ENCODE measurements at regions of chr5 and their contacts with region 1.

Region 1: DNA sequence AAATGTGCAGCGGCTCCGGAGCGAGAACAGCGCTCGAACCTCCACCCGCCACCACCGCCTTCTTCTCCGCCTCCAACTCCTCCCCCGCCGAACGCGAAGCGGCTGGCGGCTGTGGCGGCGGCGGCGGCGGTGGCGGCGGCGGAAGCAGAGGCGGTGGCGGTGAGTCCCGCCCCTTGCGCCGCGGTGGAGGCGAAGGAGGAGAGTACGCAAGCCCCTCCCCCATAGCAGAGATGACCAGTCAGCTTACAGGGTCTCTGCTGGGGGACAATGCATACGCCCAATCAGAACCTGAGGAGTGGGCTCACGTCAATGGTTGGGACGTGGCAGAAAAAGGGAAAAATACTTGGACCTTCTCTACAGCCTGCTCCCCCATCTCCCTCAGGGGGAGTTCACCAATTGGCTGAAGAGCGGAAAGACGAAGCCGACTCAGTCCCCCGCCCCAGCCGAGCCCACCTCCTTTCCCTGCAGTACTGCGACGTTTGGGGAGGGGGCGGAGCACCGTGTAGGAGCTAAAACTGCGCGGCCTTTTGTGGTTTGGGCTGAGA is at the start of gene PJA2:
- DNase-seq: peak; percentile 99
- H3K4me3 Mint-ChIP-seq: peak within 1 kb of the TSS; percentile 97
- H3K27ac Mint-ChIP-seq: peak within 1 kb of the TSS; percentile 100
- H3K4me1 Mint-ChIP-seq: peaks cover 46% of the 10 kb centered on the region
- H3K27me3 Mint-ChIP-seq: no peaks in the 10 kb centered on the region
- total RNA-seq, gene PJA2: 53.1 to 56.9 TPM

Region 2: DNA sequence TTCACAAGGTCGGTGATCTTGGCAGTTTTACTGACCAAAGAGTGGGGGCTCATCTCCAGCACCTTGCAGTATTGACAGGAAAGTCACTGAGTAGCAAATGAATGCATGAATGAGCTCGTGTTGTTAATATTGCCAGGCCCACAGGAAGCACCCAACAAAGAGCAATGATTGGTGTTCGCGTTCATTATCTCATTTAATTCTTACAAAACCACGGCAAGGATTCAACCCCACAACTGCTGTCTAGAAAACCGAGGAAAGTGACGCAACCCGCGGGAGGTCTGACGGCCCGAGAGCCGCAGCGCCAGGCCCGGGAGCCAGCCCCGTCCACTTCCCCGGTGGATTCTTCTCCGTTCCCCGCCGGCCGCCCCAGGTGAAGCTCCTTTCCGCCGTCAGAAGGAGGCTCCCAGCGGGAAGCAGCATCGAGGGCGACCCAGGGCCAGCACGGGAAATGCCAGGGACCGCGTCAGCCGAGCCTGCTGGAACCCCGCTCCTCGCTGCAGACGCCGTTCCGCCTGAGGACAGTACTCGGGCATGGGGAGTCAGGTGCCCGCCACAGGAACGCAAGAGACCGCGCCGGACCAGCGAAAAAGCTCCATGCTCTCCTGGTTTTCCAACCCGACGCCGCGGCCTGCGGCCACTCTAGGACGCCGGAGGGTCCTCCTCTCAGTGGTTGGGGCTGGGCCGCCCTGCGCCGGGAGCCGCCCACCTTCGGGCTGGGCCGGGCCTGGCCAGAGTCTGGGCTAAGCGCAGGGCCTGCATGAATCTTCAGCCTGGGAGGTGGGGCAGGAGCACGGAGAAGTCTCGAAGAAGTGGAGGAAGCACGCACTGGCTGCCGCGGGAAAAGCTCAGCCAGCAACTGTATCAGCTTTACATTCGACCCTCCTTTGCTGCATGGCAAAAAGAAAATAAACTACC is 682.0 kb before region 1 on chr5:
- CTCF ChIA-PET with region 1: interaction called, 4 read pairs
- intact Hi-C with region 1: loop called (anchors 2 kb)
- DNase-seq: peak; percentile 53
- H3K4me3 Mint-ChIP-seq: peak overlapping the region; percentile 61
- H3K27ac Mint-ChIP-seq: peak overlapping the region; percentile 6
- H3K4me1 Mint-ChIP-seq: peaks cover 21% of the 10 kb centered on the region
- H3K27me3 Mint-ChIP-seq: peaks cover 42% of the 10 kb centered on the region

Region 3: DNA sequence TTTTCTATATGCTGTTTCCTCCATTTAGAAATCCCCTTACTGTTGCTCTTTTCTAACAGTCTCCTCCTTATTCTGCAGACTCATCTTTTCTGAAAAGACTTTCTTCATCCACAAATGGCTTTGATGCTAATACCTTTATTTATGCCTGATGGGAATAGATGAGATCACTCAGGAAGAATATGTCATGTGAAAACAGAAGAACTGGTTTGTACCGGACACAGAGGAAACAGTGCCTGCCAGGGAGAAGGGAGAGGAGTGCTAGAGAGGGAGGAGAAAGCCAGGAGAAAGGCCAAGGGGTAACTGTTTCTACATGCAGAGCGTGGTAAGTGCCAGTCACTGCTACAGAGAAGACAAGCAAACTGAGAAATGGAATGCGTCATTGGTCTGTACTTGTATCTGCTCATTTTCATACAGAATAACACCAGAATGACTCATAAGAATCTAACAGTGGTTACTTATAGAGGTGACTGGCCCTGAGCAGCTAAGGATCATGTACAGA is 45.7 kb after region 1 on chr5:
- CTCF ChIA-PET with region 1: interaction called, 3 read pairs
- intact Hi-C with region 1: loop called (anchors 1 kb)
- DNase-seq: peak; percentile 54
- H3K4me3 Mint-ChIP-seq: peak overlapping the region; percentile 23
- H3K27ac Mint-ChIP-seq: peak overlapping the region; percentile 88
- H3K4me1 Mint-ChIP-seq: peaks cover 10% of the 10 kb centered on the region
- H3K27me3 Mint-ChIP-seq: peaks cover 10% of the 10 kb centered on the region

Region 4: DNA sequence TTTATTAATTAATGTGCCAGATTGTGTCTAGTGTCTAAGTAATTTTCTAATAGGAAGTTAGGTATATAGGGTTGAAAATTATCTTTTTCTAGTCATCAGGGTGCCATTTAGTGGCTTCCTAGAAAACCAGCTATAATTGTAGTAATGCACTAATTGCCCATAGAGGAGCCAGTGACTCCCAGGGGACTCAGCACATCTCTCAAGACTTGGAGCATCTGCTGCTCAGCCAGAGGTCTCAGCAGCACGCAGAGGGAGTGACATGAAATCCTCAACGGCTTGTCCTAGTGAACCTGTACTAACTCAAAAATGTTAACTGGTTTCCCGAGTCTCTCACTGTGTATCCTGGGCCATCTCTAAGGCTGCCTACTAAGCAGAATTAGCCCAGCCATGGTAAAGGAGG is 201.6 kb after region 1 on chr5:
- CTCF ChIA-PET with region 1: no interaction called
- intact Hi-C with region 1: no loop called
- DNase-seq: no peak
- H3K4me3 Mint-ChIP-seq: no peak overlapping the region
- H3K27ac Mint-ChIP-seq: no peak overlapping the region
- H3K4me1 Mint-ChIP-seq: no peaks in the 10 kb centered on the region
- H3K27me3 Mint-ChIP-seq: no peaks in the 10 kb centered on the region

Region 5: GRCh38 chr5:109936996-109937395 is 527.1 kb after region 1 on chr5:
- CTCF ChIA-PET with region 1: no interaction called
- intact Hi-C with region 1: loop called (anchors 5 kb)
- DNase-seq: peak; percentile 81
- H3K4me3 Mint-ChIP-seq: peak overlapping the region; percentile 17
- H3K27ac Mint-ChIP-seq: peak overlapping the region; percentile 80
- H3K4me1 Mint-ChIP-seq: peaks cover 29% of the 10 kb centered on the region
- H3K27me3 Mint-ChIP-seq: no peaks in the 10 kb centered on the region

Region 6: DNA sequence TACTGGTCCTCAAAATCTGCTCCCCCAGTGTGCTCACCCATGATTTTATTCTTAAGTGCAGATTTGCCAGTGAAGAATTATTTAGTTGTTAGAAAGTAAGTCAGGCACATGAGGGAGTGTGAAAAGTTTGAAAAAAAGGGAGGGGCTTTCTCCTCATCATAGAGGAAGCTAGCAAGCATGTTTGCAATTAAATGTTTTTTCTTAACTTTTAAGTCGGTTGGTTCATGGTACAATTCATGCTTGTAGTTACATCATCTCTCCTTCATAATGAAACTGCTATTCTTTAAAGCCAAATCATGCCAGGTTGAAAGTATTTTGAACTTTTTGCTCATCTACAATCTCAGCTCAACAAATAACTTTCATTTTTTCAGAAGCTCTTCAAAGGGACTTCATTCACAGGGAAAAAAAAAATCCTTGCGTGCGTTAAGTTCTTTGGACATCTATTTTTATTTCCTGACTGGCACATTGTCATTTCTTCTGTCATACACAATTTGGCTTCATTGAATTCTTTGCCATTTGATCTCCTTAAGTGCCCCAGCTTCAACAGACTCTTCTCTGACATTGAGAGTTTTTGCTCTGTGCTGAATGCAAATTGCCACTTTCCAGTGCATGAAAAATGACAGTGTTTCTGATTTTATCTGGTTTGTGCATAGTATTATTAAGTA is 859.7 kb after region 1 on chr5:
- CTCF ChIA-PET with region 1: no interaction called
- intact Hi-C with region 1: loop called (anchors 5 kb)
- DNase-seq: no peak
- H3K4me3 Mint-ChIP-seq: peak overlapping the region; percentile 3
- H3K27ac Mint-ChIP-seq: peak overlapping the region; percentile 73
- H3K4me1 Mint-ChIP-seq: peaks cover 12% of the 10 kb centered on the region
- H3K27me3 Mint-ChIP-seq: no peaks in the 10 kb centered on the region

Region 7: DNA sequence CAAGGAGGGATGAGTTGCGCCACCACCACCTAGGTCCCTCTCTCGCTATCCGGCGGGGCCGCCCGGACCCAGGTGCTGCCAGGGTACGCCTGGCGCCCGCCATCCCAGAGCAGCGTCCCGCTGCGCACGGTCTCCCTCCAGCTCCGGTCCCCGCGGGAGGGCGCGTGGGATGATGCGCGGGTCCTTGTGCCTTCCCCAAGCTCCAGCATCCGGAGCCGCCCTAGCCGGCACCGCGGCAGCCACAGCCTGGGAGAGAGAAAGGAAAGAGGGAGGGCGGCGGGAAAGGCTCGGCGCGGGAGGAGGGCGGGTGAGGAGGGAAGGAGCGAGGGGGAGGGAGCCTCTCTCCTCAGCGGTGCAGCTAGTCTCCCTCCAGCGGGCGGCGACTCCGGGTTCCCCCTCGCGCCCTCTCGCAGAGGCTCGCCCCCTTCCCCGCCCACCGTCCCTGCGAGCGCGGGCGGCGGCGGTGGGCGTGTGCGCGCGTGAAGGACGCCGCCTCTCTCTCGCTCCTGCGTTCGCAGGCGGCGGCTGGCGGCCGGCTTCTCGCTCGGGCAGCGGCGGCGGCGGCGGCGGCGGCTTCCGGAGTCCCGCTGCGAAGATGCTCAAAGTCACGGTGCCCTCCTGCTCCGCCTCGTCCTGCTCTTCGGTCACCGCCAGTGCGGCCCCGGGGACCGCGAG is 1814.1 kb after region 1 on chr5 and contains the start of gene CAMK4:
- CTCF ChIA-PET with region 1: no interaction called
- intact Hi-C with region 1: loop called (anchors 10 kb)
- DNase-seq: peak; percentile 75
- H3K4me3 Mint-ChIP-seq: peak within 1 kb of the TSS; percentile 95
- H3K27ac Mint-ChIP-seq: peak within 1 kb of the TSS; percentile 97
- H3K4me1 Mint-ChIP-seq: peaks cover 25% of the 10 kb centered on the region
- H3K27me3 Mint-ChIP-seq: no peaks in the 10 kb centered on the region
- total RNA-seq, gene CAMK4: 40.6 to 44.4 TPM